ENCODE measurements at regions of chr9 and their contacts with region 1.

Region 1: GRCh38 chr9:20941174-20941690 is 90.2 kb downstream of the HACD4 start:
- DNase-seq: peak; percentile 63
- ATAC-seq: peak; percentile 92 to 93
- H3K4me3 ChIP-seq: no peak overlapping the region
- H3K27ac ChIP-seq: no peak overlapping the region
- H3K4me1 ChIP-seq: no peaks in the 10 kb centered on the region
- H3K27me3 ChIP-seq: no peaks in the 10 kb centered on the region
- CTCF ChIP-seq: peak; percentile 88

Region 2: GRCh38 chr9:20356403-20357035 is 584.7 kb before region 1 on chr9:
- intact Hi-C with region 1: loop called (anchors 10 kb)
- DNase-seq: no peak
- ATAC-seq: peak; percentile 80 to 90
- H3K4me3 ChIP-seq: no peak overlapping the region
- H3K27ac ChIP-seq: peak overlapping the region; percentile 10
- H3K4me1 ChIP-seq: peaks cover 37% of the 10 kb centered on the region
- H3K27me3 ChIP-seq: no peaks in the 10 kb centered on the region
- CTCF ChIP-seq: peak; percentile 71

Region 3: GRCh38 chr9:21078717-21079116 is 137.5 kb after region 1 on chr9:
- intact Hi-C with region 1: no loop called
- DNase-seq: no peak
- ATAC-seq: no peak
- H3K4me3 ChIP-seq: no peak overlapping the region
- H3K27ac ChIP-seq: no peak overlapping the region
- H3K4me1 ChIP-seq: peaks cover 3% of the 10 kb centered on the region
- H3K27me3 ChIP-seq: no peaks in the 10 kb centered on the region
- CTCF ChIP-seq: no peak

Region 4: DNA sequence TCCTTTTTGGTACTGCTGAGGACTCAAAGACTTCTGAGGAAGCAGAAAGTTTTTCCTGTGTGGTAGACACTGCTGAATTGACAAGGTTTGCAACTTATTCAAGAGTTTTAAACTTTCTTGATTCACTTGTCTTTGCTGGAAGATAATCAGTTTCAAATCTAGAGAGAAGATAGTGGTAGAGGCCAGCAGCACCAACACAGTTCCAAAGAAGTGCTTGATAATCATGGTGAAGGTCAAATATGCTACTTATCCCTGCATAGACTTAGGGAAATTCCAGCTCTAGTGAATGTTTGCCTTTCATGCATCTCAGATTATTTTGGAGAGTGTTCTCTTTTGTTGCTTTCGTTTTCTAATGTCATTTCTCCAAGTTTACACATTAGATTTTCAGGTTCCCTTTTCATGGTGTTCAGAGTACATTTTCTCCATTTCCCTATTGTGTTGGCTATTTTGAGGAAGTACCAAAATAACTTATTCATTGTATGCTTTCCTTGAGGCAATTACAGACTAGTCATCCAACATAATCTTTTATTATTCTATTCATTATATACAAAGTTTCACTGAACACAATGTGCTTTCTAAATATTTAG is 540.3 kb after region 1 on chr9:
- intact Hi-C with region 1: no loop called
- DNase-seq: no peak
- ATAC-seq: peak; percentile 33 to 45
- H3K4me3 ChIP-seq: no peak overlapping the region
- H3K27ac ChIP-seq: no peak overlapping the region
- H3K4me1 ChIP-seq: no peaks in the 10 kb centered on the region
- H3K27me3 ChIP-seq: no peaks in the 10 kb centered on the region
- CTCF ChIP-seq: no peak

Measured in lower lobe of right lung (tissue), 2 donors.